HepG2 (cell line): ENCODE measurements at regions of chr5 and their contacts with region 1.

Region 1: DNA sequence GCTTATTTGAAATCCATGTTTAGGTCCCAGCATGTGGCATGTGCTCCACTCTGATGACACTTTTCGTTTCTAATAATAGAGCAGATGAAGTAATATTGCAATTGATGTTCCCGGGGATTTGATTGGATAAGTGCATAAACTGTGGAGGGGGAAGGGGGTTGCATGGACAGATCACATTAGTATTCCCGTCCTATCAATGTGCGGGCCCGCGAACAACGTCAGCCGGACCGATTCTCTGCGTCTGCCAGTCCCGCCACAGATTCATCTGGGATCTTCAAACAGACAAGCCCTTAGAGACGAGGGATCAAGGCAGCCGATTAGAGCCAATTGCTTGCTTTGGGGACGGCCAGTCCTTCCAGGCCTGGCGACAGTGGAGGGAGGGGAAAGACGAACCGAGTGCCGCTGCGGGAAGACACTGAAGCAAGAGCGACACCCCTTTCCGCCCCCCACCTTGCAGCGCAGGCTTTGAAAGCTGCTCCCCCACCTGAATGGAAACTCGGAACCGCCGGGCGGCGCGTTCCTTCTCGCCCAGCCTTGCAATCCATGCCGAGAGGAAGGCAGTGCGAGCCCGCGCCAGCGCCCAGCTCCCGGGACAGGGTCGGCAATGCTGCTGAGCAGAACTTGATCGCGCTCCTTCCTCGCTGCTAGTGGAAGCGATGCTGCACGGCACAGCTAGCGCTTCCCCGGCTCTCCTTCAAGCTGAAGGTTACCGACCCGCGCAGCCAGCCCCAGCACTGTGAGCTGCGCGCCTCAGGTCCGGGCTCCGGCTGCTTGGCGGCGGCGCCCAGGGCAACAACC is at the start of gene RGS7BP:
- DNase-seq: no peak
- ATAC-seq: peak; percentile 97
- H3K4me3 ChIP-seq: peak within 1 kb of the TSS in 2 of 3 experiments; percentile 31 to 51; a peak in 2 of 6 replicates
- H3K27ac ChIP-seq: no peak within 1 kb of the TSS
- H3K4me1 ChIP-seq: 0 out of 2 replicates have a peak, but pooled peaks cover 6% of the 10 kb centered on the region
- H3K27me3 ChIP-seq: peaks cover 3 to 34% of the 10 kb centered on the region in 2 experiments; a peak in 4 of 5 replicates
- CTCF ChIP-seq: no peak
- EP300 ChIP-seq: no peak
- POLR2A ChIP-seq: no peak
- RAD21 ChIP-seq: no peak
- total RNA-seq, gene RGS7BP: not detected in 2 replicates

Region 2: DNA sequence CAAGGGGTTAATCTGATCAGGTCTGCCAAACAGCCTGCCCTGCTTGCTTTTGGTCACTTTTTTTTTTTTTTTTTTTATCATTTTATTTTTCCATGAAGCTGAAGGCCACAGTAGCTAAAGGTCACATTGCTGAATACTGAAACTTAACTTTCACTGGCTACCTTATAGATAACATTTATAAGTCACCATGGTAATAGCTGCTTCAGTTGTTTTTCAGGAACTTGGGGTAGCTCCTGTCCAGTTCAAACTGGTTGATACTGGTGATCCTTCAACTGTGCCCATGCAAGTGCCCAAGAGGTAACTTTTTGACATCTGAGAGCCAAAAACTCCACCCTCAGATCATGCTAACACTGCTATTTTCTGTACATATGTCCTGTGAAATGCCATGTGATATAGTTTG is 68.5 kb before region 1 on chr5:
- CTCF ChIA-PET with region 1: no interaction called
- POLR2A ChIA-PET with region 1: no interaction called
- in situ Hi-C with region 1: no loop called
- intact Hi-C with region 1: loop called (anchors 10 kb)
- DNase-seq: no peak
- ATAC-seq: no peak
- H3K4me3 ChIP-seq: no peak overlapping the region
- H3K27ac ChIP-seq: no peak overlapping the region
- H3K4me1 ChIP-seq: no peaks in the 10 kb centered on the region
- H3K27me3 ChIP-seq: no peaks in the 10 kb centered on the region
- CTCF ChIP-seq: no peak
- EP300 ChIP-seq: no peak
- POLR2A ChIP-seq: no peak
- RAD21 ChIP-seq: no peak